Heart right ventricle (tissue), 16 donors: ENCODE measurements at regions of chr3 and their contacts with region 1.

Region 1: GRCh38 chr3:48299746-48300712 is 33.4 kb downstream of the SPINK8 start:
- DNase-seq: no peak
- ATAC-seq: no peak
- H3K4me3 ChIP-seq: peak overlapping the region; percentile 73 to 91 (median 86)
- H3K27ac ChIP-seq: peak overlapping the region in 8 of 10 donors; percentile 94 to 98 (median 98)
- H3K4me1 ChIP-seq: peaks cover 9 to 26% (median 18%) of the 10 kb centered on the region in 9 donors
- H3K27me3 ChIP-seq: no peaks in the 10 kb centered on the region
- CTCF ChIP-seq: no peak

Region 2: DNA sequence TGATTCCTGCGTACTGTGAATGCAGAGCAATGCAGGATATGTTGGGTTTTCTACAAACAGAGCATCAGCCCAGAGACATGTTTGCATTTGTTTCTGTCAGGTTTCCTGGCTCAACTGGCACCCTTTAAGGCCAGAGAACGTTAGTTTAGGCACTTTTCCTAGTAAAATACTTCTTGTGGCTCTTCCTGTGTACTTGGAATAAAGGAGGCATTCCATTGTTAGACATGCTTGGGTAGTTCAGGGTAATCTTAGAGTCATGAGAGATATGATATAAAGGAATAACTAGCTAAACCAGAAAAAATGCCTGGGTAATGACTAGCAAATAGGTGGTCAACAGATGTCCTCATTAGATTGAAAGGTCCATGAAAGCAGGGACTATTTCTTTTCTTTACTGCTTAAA is 1728.3 kb after region 1 on chr3:
- intact Hi-C with region 1: loop called in 1 of 10 experiments (anchors 10 kb)
- DNase-seq: no peak
- ATAC-seq: peak in 1 of 8 donors; percentile 20
- H3K4me3 ChIP-seq: no peak overlapping the region
- H3K27ac ChIP-seq: no peak overlapping the region
- H3K4me1 ChIP-seq: peaks cover 0 to 11% (median 0%) of the 10 kb centered on the region in 9 donors
- H3K27me3 ChIP-seq: no peaks in the 10 kb centered on the region
- CTCF ChIP-seq: no peak